Sciatic nerve (tissue), 2 donors: ENCODE measurements at regions of chr10 and their contacts with region 1.

Region 1: GRCh38 chr10:63192826-63193225 is 59.7 kb downstream of the NRBF2 start:
- DNase-seq: no peak
- ATAC-seq: no peak

Region 2: DNA sequence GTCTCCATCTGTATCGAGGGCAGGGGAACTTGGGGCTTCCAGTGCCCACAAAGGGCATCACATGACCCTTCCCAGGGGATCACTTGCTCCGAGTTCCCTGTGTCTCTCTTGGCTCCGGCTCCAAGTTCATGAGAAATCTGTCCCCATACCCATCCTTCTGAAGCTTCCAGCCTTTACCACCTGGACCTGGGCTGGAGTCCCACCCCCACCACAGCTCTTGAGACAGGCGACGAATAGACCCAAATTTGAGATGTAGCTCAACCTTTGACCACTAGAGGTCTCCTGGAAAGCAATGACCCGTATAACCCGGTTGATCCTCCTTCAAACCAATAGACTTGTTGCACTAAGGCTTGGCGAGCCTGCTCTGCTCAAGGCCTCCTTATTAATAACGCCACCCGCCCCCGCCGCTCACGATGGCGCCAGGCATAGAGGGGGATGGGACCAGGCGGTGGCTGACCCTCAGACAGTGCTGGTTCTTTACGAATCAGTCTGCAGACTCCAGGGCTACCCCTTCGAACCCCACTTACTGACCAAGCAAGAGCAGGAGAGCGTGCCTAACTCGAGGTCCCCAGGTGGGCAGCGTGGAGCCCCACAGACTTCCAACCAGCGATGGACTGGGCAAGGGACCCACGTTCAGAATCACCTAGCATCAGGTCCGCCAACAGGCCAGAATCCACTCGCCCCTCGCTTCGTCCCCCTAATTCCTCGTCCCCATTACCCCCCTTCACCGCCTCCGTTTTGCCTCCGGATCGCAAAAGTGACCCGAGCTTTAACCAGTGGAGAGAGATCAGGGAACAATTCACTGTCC is 1295.8 kb before region 1 on chr10:
- intact Hi-C with region 1: loop called (anchors 5 kb)
- DNase-seq: peak; percentile 75
- ATAC-seq: peak; percentile 78

Region 3: GRCh38 chr10:63217120-63217605 is 24.3 kb after region 1 on chr10:
- intact Hi-C with region 1: no loop called
- DNase-seq: no peak
- ATAC-seq: peak; percentile 88